ENCODE measurements at regions of chr11 and their contacts with region 1.

Region 1: DNA sequence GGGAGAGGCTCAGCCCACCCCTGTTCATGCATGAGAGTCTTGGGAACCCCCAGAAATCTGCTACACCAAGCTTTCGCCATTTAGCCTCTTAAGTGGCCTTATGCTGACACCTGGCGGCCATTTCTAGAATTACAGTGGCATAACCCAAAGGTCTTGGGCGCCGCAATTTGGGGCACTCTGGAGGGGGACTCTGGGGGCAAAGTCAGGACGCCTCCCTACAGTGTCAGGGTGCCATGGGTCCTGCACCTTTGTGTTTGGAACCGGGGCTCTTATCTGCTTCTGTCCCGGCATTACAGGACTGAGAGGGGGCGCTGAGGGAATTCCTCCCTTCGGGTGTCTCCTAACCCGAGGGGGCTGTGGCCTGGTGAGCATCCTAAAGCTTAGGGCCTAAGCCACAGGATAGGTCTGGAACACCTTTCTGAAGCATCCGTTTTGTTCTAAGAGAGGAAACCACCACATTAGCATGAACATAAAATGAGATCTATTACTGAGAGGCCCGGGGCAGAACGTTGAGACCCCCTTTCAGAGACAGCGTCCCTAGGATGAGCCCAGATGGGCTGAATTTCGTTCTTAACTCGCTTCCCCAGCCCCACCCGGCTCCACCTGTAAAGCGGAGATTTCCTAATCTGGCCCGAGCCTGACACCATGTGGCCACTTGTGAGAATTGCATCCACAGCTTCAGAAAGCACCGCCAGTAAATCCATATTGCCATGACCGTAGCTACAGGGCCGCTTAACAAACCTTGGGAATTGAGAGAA is 9.3 kb downstream of the INS start:
- DNase-seq: no peak
- H3K4me3 ChIP-seq: no peak overlapping the region
- H3K27me3 ChIP-seq: peaks cover 11% of the 10 kb centered on the region
- CTCF ChIP-seq: peak; percentile 76

Region 2: DNA sequence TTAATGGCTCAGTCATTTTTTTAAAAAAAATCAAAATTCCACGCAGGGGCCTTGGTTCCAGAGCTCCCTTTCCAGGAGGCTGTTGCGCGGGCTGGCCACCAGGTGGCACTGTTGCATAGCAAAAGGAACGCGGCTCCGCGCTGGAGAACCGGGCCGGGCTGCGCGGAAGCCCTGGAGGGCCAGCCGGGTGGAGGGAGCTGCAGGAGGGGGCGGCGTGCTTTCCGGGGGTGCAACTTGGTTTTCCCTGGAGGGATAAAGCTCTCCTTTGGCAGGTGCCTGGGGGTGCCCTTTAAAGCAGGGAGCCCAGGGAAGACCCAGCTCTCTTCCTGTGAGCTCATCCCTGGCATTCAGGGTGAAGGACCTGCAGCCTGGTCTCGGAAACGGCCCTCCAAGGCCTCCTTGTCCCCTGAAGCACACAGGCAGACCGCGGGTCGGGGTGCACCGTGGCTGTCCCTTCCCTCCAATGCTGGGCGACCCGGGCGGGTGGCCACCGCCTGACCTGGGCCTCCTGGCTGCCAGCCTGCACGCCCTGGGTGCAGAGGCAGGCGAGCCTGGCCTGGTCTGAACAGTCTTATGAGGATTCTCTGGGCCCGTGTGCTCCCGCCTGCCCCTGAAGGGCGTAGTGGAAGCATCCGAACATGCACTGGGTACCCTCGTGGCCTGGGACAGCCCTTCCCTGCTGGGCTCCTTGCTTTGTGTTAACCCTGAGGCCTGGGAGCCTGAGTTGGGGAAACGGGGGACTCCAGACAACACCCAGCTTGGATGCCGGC is 498.7 kb before region 1 on chr11:
- CTCF ChIA-PET with region 1: interaction called, 41 read pairs
- POLR2A ChIA-PET with region 1: no interaction called
- DNase-seq: no peak
- H3K4me3 ChIP-seq: no peak overlapping the region
- H3K27me3 ChIP-seq: peaks cover 6% of the 10 kb centered on the region
- CTCF ChIP-seq: peak; percentile 96

Region 3: DNA sequence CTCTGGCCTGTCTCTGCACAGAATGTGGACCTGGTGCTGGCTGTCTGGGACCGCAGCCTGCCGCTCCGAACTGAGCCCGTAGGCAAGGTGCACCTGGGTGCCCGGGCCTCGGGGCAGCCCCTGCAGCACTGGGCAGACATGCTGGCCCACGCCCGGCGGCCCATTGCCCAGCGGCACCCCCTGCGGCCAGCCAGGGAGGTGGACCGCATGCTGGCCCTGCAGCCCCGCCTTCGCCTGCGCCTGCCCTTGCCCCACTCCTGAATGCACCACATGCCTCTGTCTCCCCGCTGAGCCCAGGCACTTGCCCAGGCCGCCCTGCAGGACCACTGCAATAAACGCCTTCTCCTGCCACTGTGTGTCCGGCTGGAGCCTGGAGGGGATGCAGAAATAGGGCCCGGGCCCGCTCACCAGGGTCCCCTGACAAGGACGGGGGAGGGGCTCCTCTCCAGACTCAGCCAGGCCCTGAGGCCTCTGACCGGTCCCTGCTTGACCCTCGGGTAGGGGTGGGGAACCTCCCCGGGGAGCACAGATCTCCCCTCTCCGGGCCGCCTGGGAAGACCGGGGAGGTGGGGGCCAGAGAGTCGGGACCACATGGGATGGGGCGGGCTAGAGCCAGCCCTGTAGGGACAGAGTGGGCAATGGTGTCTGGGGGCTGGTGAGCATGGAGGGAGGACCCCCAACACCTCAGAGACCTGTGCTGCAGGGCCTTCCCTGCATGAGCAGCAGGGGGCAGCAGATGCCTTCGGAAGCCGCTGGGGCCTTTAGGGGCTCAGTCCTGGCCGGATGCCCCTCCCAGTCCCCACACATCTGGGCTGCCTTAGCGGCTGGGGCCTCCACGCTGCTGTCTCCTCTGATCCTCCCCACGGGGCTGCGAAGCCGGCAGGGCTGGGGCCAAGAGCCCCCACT is 314.3 kb before region 1 on chr11:
- CTCF ChIA-PET with region 1: interaction called, 114 read pairs
- POLR2A ChIA-PET with region 1: no interaction called
- DNase-seq: no peak
- H3K4me3 ChIP-seq: no peak overlapping the region
- H3K27me3 ChIP-seq: no peaks in the 10 kb centered on the region; the same call in 1 of the 2 replicates
- CTCF ChIP-seq: peak; percentile 93

Region 4: DNA sequence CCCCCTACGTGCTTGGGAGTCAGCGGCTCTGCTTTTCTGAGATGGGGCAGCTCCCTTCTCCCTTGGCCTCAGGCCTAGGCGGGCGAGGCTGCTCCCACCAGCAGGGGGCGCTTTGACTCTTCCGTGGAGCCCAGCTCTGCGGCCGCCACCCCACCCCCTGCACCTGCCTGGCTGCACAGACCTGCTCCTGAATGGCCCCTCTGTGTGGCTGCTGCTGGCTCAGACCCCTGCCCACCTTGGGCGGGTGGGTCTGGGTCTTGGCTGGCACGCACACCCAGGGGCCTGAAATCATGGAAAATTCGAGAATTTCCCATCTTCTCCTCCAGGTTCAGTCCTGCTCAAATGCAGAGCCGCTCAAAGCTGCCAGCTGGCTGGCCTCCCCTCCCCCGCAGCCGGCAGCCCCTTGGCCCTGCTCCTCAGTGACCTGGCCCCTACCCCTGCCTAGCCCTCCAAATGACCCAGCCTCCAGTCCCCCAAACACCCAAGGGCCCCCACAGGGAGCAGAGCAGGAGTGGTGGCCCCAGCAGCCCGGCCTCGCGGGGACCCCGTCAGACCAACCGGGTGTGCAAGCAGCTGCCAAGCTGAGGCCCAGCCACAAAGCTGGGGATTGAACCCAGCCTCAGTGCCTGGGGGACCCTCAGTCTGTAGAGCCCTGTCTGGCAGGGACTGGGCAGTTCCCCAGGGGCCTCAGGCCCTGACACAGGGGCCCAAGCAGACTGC is 269.0 kb before region 1 on chr11:
- CTCF ChIA-PET with region 1: interaction called, 114 read pairs
- POLR2A ChIA-PET with region 1: no interaction called
- DNase-seq: no peak
- H3K4me3 ChIP-seq: no peak overlapping the region
- H3K27me3 ChIP-seq: no peaks in the 10 kb centered on the region; the same call in none of the 2 replicates
- CTCF ChIP-seq: peak; percentile 94

Region 5: GRCh38 chr11:2002807-2003206 is 148.9 kb before region 1 on chr11:
- CTCF ChIA-PET with region 1: interaction called, 61 read pairs
- POLR2A ChIA-PET with region 1: no interaction called
- DNase-seq: no peak
- H3K4me3 ChIP-seq: no peak overlapping the region
- H3K27me3 ChIP-seq: no peaks in the 10 kb centered on the region
- CTCF ChIP-seq: no peak

Region 6: DNA sequence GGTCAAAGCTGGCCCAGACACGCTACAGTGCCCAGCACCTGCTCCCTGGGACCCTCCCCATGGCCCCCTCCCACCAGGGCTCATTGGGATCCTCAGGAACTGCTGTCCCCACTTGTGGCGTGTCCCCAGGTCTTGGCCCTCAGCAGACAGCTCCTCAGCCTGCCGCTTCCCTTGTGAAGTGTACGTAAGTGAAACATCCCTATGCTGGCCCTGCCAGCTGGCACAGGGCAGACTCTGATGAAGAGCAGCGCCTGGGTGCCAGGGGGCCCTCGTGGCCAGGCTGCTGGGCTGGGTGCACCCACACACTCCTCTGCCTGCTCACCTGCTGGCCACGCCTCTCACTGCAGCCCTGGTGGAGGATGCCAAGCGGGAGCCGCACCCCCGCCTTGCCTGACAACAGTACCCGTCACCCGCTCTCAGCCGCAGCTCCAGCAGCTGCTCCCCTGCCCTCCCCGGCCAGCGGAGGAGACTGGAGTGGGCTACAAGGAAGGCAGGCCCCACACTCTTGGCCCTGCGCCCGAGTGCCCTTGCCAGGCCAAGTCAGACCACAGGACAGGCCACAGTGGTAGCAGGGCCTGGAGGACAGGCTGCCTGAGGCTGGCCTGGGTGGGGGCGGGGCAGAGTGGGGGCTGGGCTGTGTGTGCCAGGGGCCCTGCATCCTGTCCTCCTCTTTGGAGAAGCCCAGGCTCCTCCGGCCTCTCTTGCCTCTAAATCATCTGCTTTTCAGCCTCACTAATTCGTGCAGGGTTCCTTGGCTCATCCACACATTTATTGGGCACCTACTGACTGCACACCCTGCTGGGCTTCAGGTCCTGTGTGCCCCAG is 52.0 kb before region 1 on chr11:
- CTCF ChIA-PET with region 1: interaction called, 44 read pairs
- POLR2A ChIA-PET with region 1: no interaction called
- DNase-seq: no peak
- H3K4me3 ChIP-seq: no peak overlapping the region
- H3K27me3 ChIP-seq: no peaks in the 10 kb centered on the region; the same call in 1 of the 2 replicates
- CTCF ChIP-seq: no peak

Region 7: GRCh38 chr11:2208691-2209369 is 57.2 kb after region 1 on chr11:
- CTCF ChIA-PET with region 1: no interaction called
- POLR2A ChIA-PET with region 1: no interaction called
- DNase-seq: no peak
- H3K4me3 ChIP-seq: no peak overlapping the region
- H3K27me3 ChIP-seq: peaks cover 4% of the 10 kb centered on the region; the same call in 1 of the 2 replicates
- CTCF ChIP-seq: no peak

Measured in BJ (cell line).